Activated CD8-positive, alpha-beta T cell treated with anti-CD3 and anti-CD28 coated beads, Interleukin-2, amount 10 ng/mL, durations not matched to agents 7 days and 5 days (primary cell): ENCODE measurements at regions of chr1 and their contacts with region 1.

Region 1: DNA sequence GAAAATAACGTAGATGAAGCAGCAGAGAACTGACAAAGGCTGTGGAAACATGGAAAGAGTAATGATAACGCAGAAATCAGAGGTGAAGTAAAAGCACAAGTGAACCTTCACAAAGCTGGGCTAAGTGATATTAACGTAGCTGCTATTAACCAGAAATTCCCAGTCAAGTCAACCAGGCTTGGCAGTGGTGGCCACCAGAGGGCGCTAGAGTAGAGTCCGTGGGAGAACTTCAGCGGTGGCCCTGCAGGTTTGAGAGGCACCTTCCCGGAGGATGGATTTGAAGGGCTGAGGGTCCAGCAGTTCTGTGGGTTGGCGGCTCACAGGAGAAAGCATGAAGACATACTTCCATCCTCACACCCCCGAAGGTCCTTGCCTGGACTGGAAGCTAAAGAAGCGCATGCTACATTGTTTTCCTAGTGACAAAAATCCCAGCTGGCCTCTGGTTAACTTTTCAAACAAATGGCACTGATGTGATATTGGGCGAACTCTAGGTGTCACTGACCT is 81.7 kb upstream of the ZNF648 start:
- DNase-seq: peak; percentile 89
- ATAC-seq: peak; percentile 80
- H3K4me3 Mint-ChIP-seq: no peak overlapping the region
- H3K27ac Mint-ChIP-seq: no peak overlapping the region
- H3K4me1 Mint-ChIP-seq: peaks cover 26% of the 10 kb centered on the region
- H3K27me3 Mint-ChIP-seq: peaks cover 5% of the 10 kb centered on the region

Region 2: DNA sequence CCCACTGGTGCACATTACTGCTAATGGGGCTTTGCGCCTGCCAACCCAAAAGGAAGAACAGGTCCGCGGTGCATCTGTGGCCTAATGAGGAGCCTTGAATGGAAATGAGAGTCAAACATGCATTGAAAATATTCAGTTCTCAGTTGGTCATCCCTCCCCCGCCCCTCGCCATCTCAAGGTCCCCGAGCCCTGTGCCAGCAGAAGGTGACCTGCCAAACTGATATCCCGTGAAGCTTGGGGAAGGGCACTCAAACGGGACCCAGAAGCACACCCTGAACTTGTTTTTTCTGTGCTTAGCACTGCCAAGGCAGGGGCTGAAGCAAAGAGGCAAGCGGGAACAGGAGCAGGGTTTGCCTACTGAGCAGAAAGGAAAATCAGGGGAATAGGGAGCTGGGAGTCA is 13.8 kb before region 1 on chr1:
- CTCF ChIA-PET with region 1: interaction called, 42 read pairs
- POLR2A ChIA-PET with region 1: no interaction called
- DNase-seq: no peak
- ATAC-seq: no peak
- H3K4me3 Mint-ChIP-seq: no peak overlapping the region
- H3K27ac Mint-ChIP-seq: no peak overlapping the region
- H3K4me1 Mint-ChIP-seq: no peaks in the 10 kb centered on the region
- H3K27me3 Mint-ChIP-seq: peaks cover 5% of the 10 kb centered on the region

Region 3: DNA sequence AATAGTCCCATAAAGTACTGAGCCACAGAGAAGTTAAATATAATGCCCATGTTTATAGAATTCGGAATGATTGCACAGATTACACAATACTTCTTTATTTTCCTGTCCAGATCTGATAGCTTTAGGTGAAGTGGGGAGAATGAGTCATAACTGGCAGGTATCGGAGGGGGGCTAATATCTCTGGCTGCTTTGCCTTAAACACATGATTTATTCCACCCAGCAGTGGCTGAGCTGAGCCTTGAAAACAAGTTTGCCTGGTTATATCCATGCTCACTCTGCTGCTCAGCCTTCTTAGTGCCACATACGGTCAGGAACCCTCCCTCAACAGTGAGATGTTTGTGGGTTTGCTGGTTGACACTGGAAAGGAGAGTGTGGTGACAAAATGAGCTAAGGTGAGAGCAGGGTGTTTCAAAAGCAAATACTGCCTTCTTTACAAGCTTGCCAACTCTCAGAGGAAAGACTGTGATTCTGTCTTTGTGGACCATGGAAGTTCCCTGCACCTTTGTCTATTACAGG is 38.0 kb after region 1 on chr1:
- CTCF ChIA-PET with region 1: interaction called, 14 read pairs
- POLR2A ChIA-PET with region 1: no interaction called
- DNase-seq: no peak
- ATAC-seq: no peak
- H3K4me3 Mint-ChIP-seq: no peak overlapping the region
- H3K27ac Mint-ChIP-seq: no peak overlapping the region
- H3K4me1 Mint-ChIP-seq: no peaks in the 10 kb centered on the region
- H3K27me3 Mint-ChIP-seq: peaks cover 4% of the 10 kb centered on the region

Region 4: GRCh38 chr1:182249201-182249676 is 106.0 kb after region 1 on chr1:
- CTCF ChIA-PET with region 1: interaction called, 29 read pairs
- POLR2A ChIA-PET with region 1: interaction called, 3 read pairs
- DNase-seq: no peak
- ATAC-seq: no peak
- H3K4me3 Mint-ChIP-seq: no peak overlapping the region
- H3K27ac Mint-ChIP-seq: no peak overlapping the region
- H3K4me1 Mint-ChIP-seq: peaks cover 7% of the 10 kb centered on the region
- H3K27me3 Mint-ChIP-seq: peaks cover 2% of the 10 kb centered on the region

Region 5: GRCh38 chr1:182301467-182302198 is 158.4 kb after region 1 on chr1:
- CTCF ChIA-PET with region 1: interaction called, 10 read pairs
- POLR2A ChIA-PET with region 1: no interaction called
- DNase-seq: no peak
- ATAC-seq: no peak
- H3K4me3 Mint-ChIP-seq: no peak overlapping the region
- H3K27ac Mint-ChIP-seq: no peak overlapping the region
- H3K4me1 Mint-ChIP-seq: peaks cover 21% of the 10 kb centered on the region
- H3K27me3 Mint-ChIP-seq: no peaks in the 10 kb centered on the region

Region 6: DNA sequence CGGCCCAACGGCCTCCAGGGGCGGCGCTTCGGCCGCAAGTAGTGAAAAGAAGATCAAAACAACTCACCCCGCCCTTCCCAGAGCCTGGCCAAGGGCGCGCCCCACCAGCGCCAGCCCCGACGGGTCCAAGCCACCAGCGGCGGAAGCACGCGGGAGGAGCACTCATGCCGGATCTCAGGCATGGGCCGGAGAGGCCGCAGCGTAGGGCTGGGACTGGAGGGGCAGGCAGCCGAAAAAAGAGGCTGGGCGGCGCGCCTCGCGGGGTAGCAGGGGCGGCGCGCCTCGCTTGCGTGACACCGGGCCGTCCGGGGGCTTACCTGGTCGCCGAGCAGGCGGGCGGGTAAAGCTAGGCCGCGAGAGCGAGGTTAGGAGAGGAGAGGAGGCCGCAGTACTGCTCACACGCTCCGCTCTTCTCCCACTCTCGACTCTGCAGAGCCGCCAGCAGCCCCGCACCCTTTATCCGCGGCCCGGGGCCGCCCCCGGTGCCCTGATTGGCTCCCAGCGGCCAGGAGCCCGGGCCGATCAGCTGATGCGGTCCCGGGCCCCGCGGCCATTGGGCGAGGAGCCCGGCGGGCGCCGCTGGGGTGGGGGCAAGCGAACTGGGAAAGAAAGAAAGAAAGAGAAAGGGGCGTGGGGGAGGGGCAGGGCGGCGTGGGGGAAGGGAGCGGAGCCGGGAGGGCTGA is 248.3 kb after region 1 on chr1 and contains the start of gene GLUL:
- CTCF ChIA-PET with region 1: interaction called, 401 read pairs
- POLR2A ChIA-PET with region 1: interaction called, 5 read pairs
- DNase-seq: peak; percentile 79
- ATAC-seq: peak; percentile 79
- H3K4me3 Mint-ChIP-seq: peak within 1 kb of the TSS; percentile 98
- H3K27ac Mint-ChIP-seq: peak within 1 kb of the TSS; percentile 91
- H3K4me1 Mint-ChIP-seq: peaks cover 26% of the 10 kb centered on the region
- H3K27me3 Mint-ChIP-seq: peaks cover 27% of the 10 kb centered on the region
- total RNA-seq, gene GLUL: 97.5 to 98.0 TPM